Endothelial cell of umbilical vein (primary cell): ENCODE measurements at regions of chrX and their contacts with region 1.

Region 1: DNA sequence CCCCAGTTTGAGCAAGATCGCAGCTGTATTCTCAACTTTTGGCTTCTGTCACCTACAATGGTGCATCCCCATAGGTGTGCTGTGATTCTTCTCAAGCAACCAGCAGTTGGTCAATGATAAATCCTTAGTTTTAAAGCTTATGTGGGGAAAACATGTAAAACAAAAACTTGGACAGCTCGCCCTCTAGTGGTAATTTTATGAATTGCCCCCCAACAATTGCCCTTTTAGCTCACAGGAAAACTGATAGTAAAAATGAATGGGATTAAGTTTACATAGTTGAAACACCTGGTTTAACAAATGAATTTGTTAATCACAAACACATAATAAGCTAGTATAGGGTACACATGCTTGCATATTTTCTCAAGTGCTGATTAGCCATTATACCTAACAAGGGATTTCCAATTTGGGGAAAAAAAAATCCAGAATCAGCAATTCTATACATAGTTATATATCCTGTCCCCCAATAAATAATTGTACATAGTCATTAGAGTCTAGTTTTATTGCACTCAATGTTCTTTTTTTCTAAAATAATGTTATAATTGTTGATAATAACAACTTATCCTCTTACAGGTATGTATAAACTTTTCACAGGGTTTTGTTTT is 30.1 kb downstream of the TEX13A start:
- DNase-seq: peak; percentile 43
- H3K4me3 ChIP-seq: no peak overlapping the region
- H3K27ac ChIP-seq: no peak overlapping the region
- H3K4me1 ChIP-seq: no peaks in the 10 kb centered on the region
- H3K27me3 ChIP-seq: no peaks in the 10 kb centered on the region
- CTCF ChIP-seq: peak; percentile 41 to 43
- POLR2A ChIP-seq: no peak

Region 2: GRCh38 chrX:104565791-104566680 is 624.3 kb before region 1 on chrX and contains the start of gene IL1RAPL2:
- CTCF ChIA-PET with region 1: interaction called, 18 read pairs
- POLR2A ChIA-PET with region 1: no interaction called
- dilution Hi-C with region 1: no loop called
- intact Hi-C with region 1: no loop called
- DNase-seq: no peak
- H3K4me3 ChIP-seq: no peak within 1 kb of the TSS
- H3K27ac ChIP-seq: no peak within 1 kb of the TSS
- H3K4me1 ChIP-seq: no peaks in the 10 kb centered on the region
- H3K27me3 ChIP-seq: peaks cover 23 to 29% of the 10 kb centered on the region in 2 experiments
- CTCF ChIP-seq: peak; percentile 9 to 47
- POLR2A ChIP-seq: no peak
- total RNA-seq, gene IL1RAPL2: not detected in 2 replicates

Region 3: GRCh38 chrX:104902070-104902469 is 288.3 kb before region 1 on chrX:
- CTCF ChIA-PET with region 1: no interaction called
- POLR2A ChIA-PET with region 1: no interaction called
- dilution Hi-C with region 1: no loop called
- intact Hi-C with region 1: no loop called
- DNase-seq: no peak
- H3K4me3 ChIP-seq: no peak overlapping the region
- H3K27ac ChIP-seq: no peak overlapping the region
- H3K4me1 ChIP-seq: no peaks in the 10 kb centered on the region
- H3K27me3 ChIP-seq: no peaks in the 10 kb centered on the region
- CTCF ChIP-seq: no peak
- POLR2A ChIP-seq: no peak

Region 4: DNA sequence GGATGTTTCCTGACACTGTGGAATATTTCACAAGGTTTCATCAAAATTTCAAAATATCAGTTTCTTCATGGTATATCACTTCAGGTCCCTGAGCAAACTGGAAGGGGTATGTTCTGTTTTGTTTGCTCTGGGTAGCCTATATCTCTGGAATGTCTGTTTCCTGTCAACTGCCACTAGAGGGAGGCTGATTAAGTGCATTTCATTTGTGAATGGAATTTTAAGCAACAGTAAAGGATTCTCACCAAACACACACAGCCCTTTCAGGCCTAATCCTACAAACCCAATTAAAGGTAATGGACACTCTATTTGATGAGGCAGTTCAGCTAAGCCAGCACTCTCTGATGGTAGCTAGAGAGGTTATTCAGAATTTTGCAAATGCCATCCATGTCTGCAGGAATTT is 277.0 kb before region 1 on chrX:
- CTCF ChIA-PET with region 1: interaction called, 7 read pairs
- POLR2A ChIA-PET with region 1: no interaction called
- dilution Hi-C with region 1: no loop called
- intact Hi-C with region 1: loop called (anchors 1 kb)
- DNase-seq: peak; percentile 0
- H3K4me3 ChIP-seq: no peak overlapping the region
- H3K27ac ChIP-seq: no peak overlapping the region
- H3K4me1 ChIP-seq: no peaks in the 10 kb centered on the region
- H3K27me3 ChIP-seq: no peaks in the 10 kb centered on the region
- CTCF ChIP-seq: no peak
- POLR2A ChIP-seq: no peak

Region 5: GRCh38 chrX:104922206-104922621 is 268.1 kb before region 1 on chrX:
- CTCF ChIA-PET with region 1: interaction called, 10 read pairs
- POLR2A ChIA-PET with region 1: no interaction called
- dilution Hi-C with region 1: no loop called
- intact Hi-C with region 1: loop called (anchors 2 kb)
- DNase-seq: peak; percentile 53
- H3K4me3 ChIP-seq: no peak overlapping the region
- H3K27ac ChIP-seq: no peak overlapping the region
- H3K4me1 ChIP-seq: no peaks in the 10 kb centered on the region
- H3K27me3 ChIP-seq: no peaks in the 10 kb centered on the region
- CTCF ChIP-seq: peak; percentile 83 to 89
- POLR2A ChIP-seq: no peak

Region 6: GRCh38 chrX:105265093-105265492 is 74.7 kb after region 1 on chrX:
- CTCF ChIA-PET with region 1: no interaction called
- POLR2A ChIA-PET with region 1: no interaction called
- dilution Hi-C with region 1: no loop called
- intact Hi-C with region 1: no loop called
- DNase-seq: no peak
- H3K4me3 ChIP-seq: no peak overlapping the region
- H3K27ac ChIP-seq: no peak overlapping the region
- H3K4me1 ChIP-seq: no peaks in the 10 kb centered on the region
- H3K27me3 ChIP-seq: no peaks in the 10 kb centered on the region
- CTCF ChIP-seq: no peak
- POLR2A ChIP-seq: no peak

Region 7: GRCh38 chrX:105701084-105702055 is 511.0 kb after region 1 on chrX:
- CTCF ChIA-PET with region 1: interaction called, 22 read pairs
- POLR2A ChIA-PET with region 1: no interaction called
- dilution Hi-C with region 1: no loop called
- intact Hi-C with region 1: loop called (anchors 5 kb)
- DNase-seq: no peak
- H3K4me3 ChIP-seq: no peak overlapping the region
- H3K27ac ChIP-seq: no peak overlapping the region
- H3K4me1 ChIP-seq: no peaks in the 10 kb centered on the region
- H3K27me3 ChIP-seq: no peaks in the 10 kb centered on the region
- CTCF ChIP-seq: no peak
- POLR2A ChIP-seq: no peak